AG04450 (cell line): ENCODE measurements at regions of chr9 and their contacts with region 1.

Region 1: GRCh38 chr9:1009101-1009707 is 32.7 kb downstream of the DMRT3 start:
- DNase-seq: peak; percentile 34
- H3K4me3 ChIP-seq: no peak overlapping the region
- H3K27ac ChIP-seq: no peak overlapping the region
- H3K27me3 ChIP-seq: no peaks in the 10 kb centered on the region
- CTCF ChIP-seq: peak; percentile 97

Region 2: GRCh38 chr9:385818-386398 is 623.3 kb before region 1 on chr9:
- CTCF ChIA-PET with region 1: interaction called, 19 read pairs
- POLR2A ChIA-PET with region 1: no interaction called
- DNase-seq: peak; percentile 6
- H3K4me3 ChIP-seq: no peak overlapping the region
- H3K27ac ChIP-seq: no peak overlapping the region
- H3K27me3 ChIP-seq: no peaks in the 10 kb centered on the region
- CTCF ChIP-seq: peak; percentile 75

Region 3: DNA sequence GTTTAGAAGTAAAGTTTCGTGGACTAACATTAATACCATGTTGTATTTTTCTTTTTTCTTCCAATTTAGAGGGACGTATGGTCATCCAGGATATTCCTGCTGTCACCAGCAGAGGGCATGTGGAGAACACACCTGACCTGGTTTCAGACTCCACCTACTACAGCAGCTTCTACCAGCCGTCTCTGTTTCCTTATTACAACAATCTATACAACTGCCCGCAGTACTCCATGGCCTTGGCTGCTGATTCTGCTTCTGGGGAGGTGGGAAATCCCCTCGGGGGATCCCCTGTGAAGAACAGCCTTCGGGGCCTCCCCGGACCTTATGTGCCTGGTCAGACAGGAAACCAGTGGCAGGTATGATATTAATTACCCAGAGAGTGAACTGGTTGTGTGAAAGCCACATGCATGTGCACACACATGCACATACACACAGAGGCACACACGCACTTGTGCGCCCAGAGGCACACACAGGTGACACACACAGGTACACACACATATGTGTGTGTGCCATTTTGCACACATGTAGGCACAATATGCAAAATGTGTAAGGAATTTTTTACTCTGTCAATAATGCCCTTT is 115.3 kb before region 1 on chr9:
- CTCF ChIA-PET with region 1: interaction called, 33 read pairs
- POLR2A ChIA-PET with region 1: no interaction called
- DNase-seq: peak; percentile 1
- H3K4me3 ChIP-seq: no peak overlapping the region
- H3K27ac ChIP-seq: no peak overlapping the region
- H3K27me3 ChIP-seq: no peaks in the 10 kb centered on the region
- CTCF ChIP-seq: peak; percentile 80

Region 4: DNA sequence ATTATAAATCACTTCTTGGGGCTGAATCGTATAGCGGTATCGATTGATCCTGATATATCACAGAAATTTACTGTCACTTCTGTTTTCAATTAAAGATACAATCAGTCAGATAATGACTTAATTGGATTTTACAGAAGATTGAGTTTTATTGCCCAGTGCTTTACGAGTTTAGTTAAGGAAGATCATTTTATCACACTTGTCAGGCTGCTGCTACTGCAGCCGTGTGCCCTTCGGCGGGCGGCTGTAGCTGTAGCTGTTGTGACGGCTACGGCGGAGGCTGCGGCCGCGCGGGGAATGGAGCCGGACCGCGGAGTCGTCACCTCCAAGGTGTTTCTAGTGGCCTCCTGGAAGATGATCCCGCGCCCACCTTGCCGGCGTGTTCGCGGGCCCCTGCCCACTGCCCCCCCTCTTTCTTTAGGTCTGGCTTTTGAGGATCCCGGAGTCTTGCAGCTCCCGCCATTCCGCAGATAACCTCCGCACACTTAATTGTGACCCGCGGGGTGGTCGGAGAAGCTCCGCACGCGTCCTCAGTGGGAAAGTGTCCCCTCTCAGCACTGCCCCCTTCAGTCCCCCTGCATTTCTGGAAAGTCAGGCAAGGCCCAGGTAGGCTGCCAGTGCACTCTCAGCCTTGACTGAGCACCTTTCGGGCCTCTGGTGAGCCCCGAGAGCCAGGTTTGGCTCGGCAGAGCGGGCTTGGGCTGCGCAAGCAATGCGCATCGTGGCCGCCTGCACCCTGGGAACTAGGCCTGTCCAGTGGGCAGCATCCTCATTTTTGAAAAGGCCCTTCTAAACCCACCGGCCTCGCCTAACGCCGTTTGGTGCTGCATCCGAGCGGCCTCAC is 39.7 kb before region 1 on chr9:
- CTCF ChIA-PET with region 1: no interaction called
- POLR2A ChIA-PET with region 1: no interaction called
- DNase-seq: no peak
- H3K4me3 ChIP-seq: no peak overlapping the region
- H3K27ac ChIP-seq: no peak overlapping the region
- H3K27me3 ChIP-seq: peaks cover 76% of the 10 kb centered on the region
- CTCF ChIP-seq: no peak

Region 5: GRCh38 chr9:981491-981898 is 27.7 kb before region 1 on chr9:
- CTCF ChIA-PET with region 1: interaction called, 15 read pairs
- POLR2A ChIA-PET with region 1: no interaction called
- DNase-seq: no peak
- H3K4me3 ChIP-seq: no peak overlapping the region
- H3K27ac ChIP-seq: no peak overlapping the region
- H3K27me3 ChIP-seq: peaks cover 53% of the 10 kb centered on the region
- CTCF ChIP-seq: 0 out of 2 replicates have a peak, but pooled peaks have one; percentile 1

Region 6: GRCh38 chr9:1198089-1198488 is 188.9 kb after region 1 on chr9:
- CTCF ChIA-PET with region 1: no interaction called
- POLR2A ChIA-PET with region 1: no interaction called
- DNase-seq: no peak
- H3K4me3 ChIP-seq: no peak overlapping the region
- H3K27ac ChIP-seq: no peak overlapping the region
- H3K27me3 ChIP-seq: no peaks in the 10 kb centered on the region
- CTCF ChIP-seq: no peak

Region 7: GRCh38 chr9:1354086-1354485 is 344.9 kb after region 1 on chr9:
- CTCF ChIA-PET with region 1: no interaction called
- POLR2A ChIA-PET with region 1: no interaction called
- DNase-seq: no peak
- H3K4me3 ChIP-seq: no peak overlapping the region
- H3K27ac ChIP-seq: no peak overlapping the region
- H3K27me3 ChIP-seq: no peaks in the 10 kb centered on the region
- CTCF ChIP-seq: no peak